Activated CD8-positive, alpha-beta T cell treated with anti-CD3 and anti-CD28 coated beads, Interleukin-2, amount 10 ng/mL, durations not matched to agents 7 days and 5 days (primary cell): ENCODE measurements at regions of chr12 and their contacts with region 1.

Region 1: GRCh38 chr12:10600988-10601387 is 12.4 kb downstream of the MAGOHB start:
- DNase-seq: no peak
- ATAC-seq: no peak
- H3K4me3 Mint-ChIP-seq: no peak overlapping the region
- H3K27ac Mint-ChIP-seq: no peak overlapping the region
- H3K4me1 Mint-ChIP-seq: peaks cover 20% of the 10 kb centered on the region
- H3K27me3 Mint-ChIP-seq: no peaks in the 10 kb centered on the region

Region 2: GRCh38 chr12:10453144-10453543 is 147.8 kb before region 1 on chr12 and contains the start of gene KLRC1:
- CTCF ChIA-PET with region 1: no interaction called
- POLR2A ChIA-PET with region 1: no interaction called
- DNase-seq: no peak
- ATAC-seq: no peak
- H3K4me3 Mint-ChIP-seq: peak within 1 kb of the TSS; percentile 8
- H3K27ac Mint-ChIP-seq: no peak within 1 kb of the TSS
- H3K4me1 Mint-ChIP-seq: peaks cover 16% of the 10 kb centered on the region
- H3K27me3 Mint-ChIP-seq: no peaks in the 10 kb centered on the region
- total RNA-seq, gene KLRC1: 4.9 to 5.0 TPM

Region 3: DNA sequence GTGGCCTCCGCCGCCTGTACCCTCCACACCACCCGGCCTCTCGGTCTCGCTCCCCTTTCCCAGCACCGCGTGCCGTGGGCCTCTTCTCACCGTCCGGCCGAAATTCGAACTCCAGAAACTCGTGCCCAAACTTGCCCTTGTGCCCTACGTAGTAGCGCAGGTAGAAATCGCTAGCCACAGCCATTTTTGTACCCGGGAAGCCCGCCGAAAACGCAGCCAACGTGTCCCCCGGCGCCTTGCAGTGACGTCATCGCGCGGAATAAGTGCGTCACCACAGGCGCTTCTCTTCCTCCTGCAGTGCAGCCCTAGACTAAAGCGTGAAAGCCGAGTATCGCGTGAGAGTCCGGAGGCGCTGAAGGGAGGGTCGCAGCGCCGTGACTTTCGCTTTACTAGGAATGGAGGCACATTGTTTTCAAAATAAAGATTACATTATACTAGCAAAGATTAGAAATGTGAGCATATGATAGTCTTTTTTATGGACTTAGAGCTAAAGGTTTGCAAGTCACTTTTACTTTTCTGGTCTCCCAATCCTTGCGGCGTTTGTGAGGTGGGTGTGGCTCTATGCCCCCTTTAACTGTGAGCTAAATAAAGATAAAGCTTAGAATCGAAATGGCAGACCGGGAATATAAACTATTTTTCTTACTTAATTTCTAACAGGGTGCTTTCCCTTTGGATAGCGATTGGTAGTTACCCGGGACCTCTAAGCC is 12.5 kb after region 1 on chr12 and contains the start of gene MAGOHB:
- CTCF ChIA-PET with region 1: no interaction called
- POLR2A ChIA-PET with region 1: interaction called, 10 read pairs
- DNase-seq: peak; percentile 99
- ATAC-seq: peak; percentile 97
- H3K4me3 Mint-ChIP-seq: peak within 1 kb of the TSS; percentile 99
- H3K27ac Mint-ChIP-seq: peak within 1 kb of the TSS; percentile 100
- H3K4me1 Mint-ChIP-seq: peaks cover 39% of the 10 kb centered on the region
- H3K27me3 Mint-ChIP-seq: no peaks in the 10 kb centered on the region
- total RNA-seq, gene MAGOHB: 73.9 to 76.9 TPM